Left lung (tissue), 14 donors: ENCODE measurements at regions of chr13 and their contacts with region 1.

Region 1: DNA sequence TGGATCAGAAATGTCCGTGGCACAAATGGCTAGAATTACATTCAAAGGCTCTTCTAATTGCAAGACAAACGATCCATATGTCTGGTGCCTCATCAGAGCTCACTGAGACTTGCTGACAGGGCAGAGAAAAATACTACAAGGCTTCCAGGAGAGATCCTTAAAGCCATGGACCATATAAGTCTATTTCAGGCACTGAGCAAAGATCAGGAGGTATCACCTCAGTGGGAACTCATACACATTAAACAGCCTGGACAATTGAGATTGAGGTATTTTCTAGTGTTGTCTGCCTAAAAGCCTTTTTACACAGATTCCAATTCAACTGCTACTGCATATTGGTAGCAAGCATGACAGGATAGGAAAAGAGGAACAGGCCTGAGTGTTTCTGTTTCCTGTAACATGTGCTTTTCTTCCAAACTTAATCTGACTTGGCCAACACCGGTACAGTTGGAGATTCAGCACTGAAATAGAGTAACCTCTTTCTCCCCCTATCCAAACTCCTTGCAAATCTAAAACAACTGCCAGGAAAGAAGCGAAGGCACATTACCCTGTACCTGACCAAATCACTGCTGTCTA is 65.9 kb downstream of the SERP2 start:
- DNase-seq: peak in 2 of 4 donors; percentile 11 to 24
- ATAC-seq: no peak
- H3K4me3 ChIP-seq: no peak overlapping the region
- H3K27ac ChIP-seq: no peak overlapping the region
- H3K4me1 ChIP-seq: peaks cover 7 to 24% of the 10 kb centered on the region in 2 donors
- H3K27me3 ChIP-seq: no peaks in the 10 kb centered on the region
- CTCF ChIP-seq: no peak

Region 2: GRCh38 chr13:43905435-43906031 is 534.0 kb before region 1 on chr13:
- intact Hi-C with region 1: loop called in 1 of 2 experiments (anchors 10 kb)
- DNase-seq: peak in 2 of 4 donors; percentile 56 to 77
- ATAC-seq: peak; percentile 89
- H3K4me3 ChIP-seq: no peak overlapping the region
- H3K27ac ChIP-seq: no peak overlapping the region
- H3K4me1 ChIP-seq: peaks cover 0 to 8% of the 10 kb centered on the region in 2 donors
- H3K27me3 ChIP-seq: no peaks in the 10 kb centered on the region
- CTCF ChIP-seq: peak; percentile 67 to 85

Region 3: GRCh38 chr13:44050450-44051063 is 389.0 kb before region 1 on chr13:
- intact Hi-C with region 1: loop called in 1 of 2 experiments (anchors 10 kb)
- DNase-seq: peak in 2 of 4 donors; percentile 23 to 48
- ATAC-seq: peak; percentile 59
- H3K4me3 ChIP-seq: no peak overlapping the region
- H3K27ac ChIP-seq: no peak overlapping the region
- H3K4me1 ChIP-seq: peaks cover 0 to 4% of the 10 kb centered on the region in 2 donors
- H3K27me3 ChIP-seq: no peaks in the 10 kb centered on the region
- CTCF ChIP-seq: peak; percentile 58 to 72